Naive thymus-derived CD4-positive, alpha-beta T cell (primary cell): ENCODE measurements at regions of chr3 and their contacts with region 1.

Region 1: DNA sequence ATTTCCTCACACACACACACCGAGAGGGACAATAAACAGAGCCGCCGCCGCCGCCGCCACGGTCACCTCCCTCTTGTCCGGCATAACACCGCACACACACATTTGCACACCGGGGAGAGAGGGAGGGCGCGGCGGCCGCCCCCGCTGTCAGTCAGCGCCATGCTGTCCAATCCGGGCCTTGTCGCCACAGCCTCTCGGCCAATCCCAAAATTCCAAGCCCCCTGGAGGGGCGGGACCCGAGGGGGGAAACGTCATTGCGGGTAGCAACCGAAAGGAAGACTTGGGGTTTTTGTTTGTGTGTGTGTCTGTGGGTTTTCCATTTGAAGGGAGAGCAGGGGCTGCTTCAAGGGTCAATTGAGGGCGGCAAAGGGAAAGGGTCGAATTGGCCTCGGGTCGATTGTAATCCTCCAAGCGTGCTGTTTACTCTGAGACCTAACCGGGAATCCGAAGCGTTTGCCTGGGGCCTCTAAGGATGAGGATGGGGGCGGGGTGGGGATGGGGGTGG is at the start of gene TOP2B:
- DNase-seq: peak; percentile 87 to 96 (median 95)
- ATAC-seq: peak; percentile 96
- H3K4me3 ChIP-seq: peak within 1 kb of the TSS; percentile 63
- H3K4me3 Mint-ChIP-seq: peak within 1 kb of the TSS; percentile 89 to 100 (median 99)
- H3K27ac ChIP-seq: peak within 1 kb of the TSS; percentile 95
- H3K27ac Mint-ChIP-seq: peak within 1 kb of the TSS; percentile 97 to 100 (median 99)
- H3K4me1 ChIP-seq: peaks cover 11 to 34% of the 10 kb centered on the region in 2 donors
- H3K4me1 Mint-ChIP-seq: peaks cover 20 to 57% (median 50%) of the 10 kb centered on the region in 7 donors
- H3K27me3 ChIP-seq: no peaks in the 10 kb centered on the region
- H3K27me3 Mint-ChIP-seq: peaks cover 0 to 4% (median 0%) of the 10 kb centered on the region in 5 donors
- total RNA-seq, gene TOP2B: 109 to 190 (median 127) TPM

Region 2: GRCh38 chr3:23916886-23917678 is 1747.8 kb before region 1 on chr3 and contains the starts of genes NKIRAS1 and RPL15:
- CTCF ChIA-PET with region 1: no interaction called
- POLR2A ChIA-PET with region 1: no interaction called
- intact Hi-C with region 1: loop called (anchors 2 to 10 kb)
- DNase-seq: peak; percentile 90 to 98 (median 97)
- ATAC-seq: peak; percentile 97
- H3K4me3 ChIP-seq: peak within 1 kb of the TSS; percentile 88
- H3K4me3 Mint-ChIP-seq: peak within 1 kb of the TSS; percentile 92 to 100 (median 98)
- H3K27ac ChIP-seq: peak within 1 kb of the TSS; percentile 83
- H3K27ac Mint-ChIP-seq: peak within 1 kb of the TSS; percentile 97 to 99 (median 98)
- H3K4me1 ChIP-seq: peaks cover 14 to 18% of the 10 kb centered on the region in 2 donors
- H3K4me1 Mint-ChIP-seq: peaks cover 33 to 52% (median 49%) of the 10 kb centered on the region in 7 donors
- H3K27me3 ChIP-seq: no peaks in the 10 kb centered on the region
- H3K27me3 Mint-ChIP-seq: peaks cover 0 to 4% (median 0%) of the 10 kb centered on the region in 5 donors
- total RNA-seq, gene NKIRAS1: 2.2 to 6.4 (median 3.2) TPM
- total RNA-seq, gene RPL15: 1,489 to 2,250 (median 2,129) TPM

Region 3: DNA sequence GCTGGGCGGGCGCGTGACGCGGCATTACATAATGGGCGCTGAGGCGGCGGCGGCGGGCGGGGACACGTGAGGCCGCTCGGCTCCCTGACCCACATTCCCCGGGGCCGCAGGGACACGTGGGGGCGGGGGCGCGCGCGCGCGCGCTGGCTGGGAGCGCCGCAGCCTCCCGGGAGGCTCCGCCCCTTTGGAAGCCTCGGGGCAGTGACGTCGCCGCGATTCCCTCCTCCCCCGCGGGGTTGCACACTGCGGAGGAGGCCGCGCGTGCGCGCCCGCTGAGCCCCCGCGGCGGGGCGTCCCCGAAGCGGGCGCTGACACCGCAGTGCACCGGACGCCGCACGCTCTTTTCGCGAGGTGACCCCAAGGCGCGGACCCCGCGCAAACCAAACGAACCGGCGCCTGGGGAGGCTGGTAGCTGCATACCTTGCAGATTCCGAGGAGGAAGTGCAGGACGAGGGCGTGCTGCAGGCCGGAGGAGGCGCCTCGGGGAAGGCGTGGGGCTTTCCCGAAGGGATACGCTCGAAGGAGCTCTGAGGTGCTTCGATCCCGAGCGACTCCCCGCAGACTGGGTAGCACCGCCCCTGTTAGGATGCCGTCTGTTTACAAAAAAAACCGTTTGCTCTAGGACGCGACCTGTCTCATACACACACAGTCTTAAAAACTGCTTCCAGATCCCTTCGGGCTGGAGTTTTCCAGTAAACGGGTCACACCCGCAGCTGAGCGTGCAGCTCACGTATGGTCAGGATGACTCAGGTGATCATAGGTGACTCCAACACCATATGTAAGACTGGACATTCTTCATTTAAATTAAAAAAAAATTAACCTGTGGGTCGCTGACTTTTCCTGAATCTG is 1718.7 kb before region 1 on chr3:
- CTCF ChIA-PET with region 1: no interaction called
- POLR2A ChIA-PET with region 1: no interaction called
- intact Hi-C with region 1: loop called in 1 of 2 experiments (anchors 10 kb)
- DNase-seq: peak; percentile 93 to 98 (median 97)
- ATAC-seq: peak; percentile 89
- H3K4me3 ChIP-seq: peak overlapping the region; percentile 79
- H3K4me3 Mint-ChIP-seq: peak overlapping the region; percentile 70 to 90 (median 87)
- H3K27ac ChIP-seq: peak overlapping the region; percentile 81
- H3K27ac Mint-ChIP-seq: peak overlapping the region; percentile 53 to 95 (median 90)
- H3K4me1 ChIP-seq: peaks cover 28 to 31% of the 10 kb centered on the region in 2 donors
- H3K4me1 Mint-ChIP-seq: peaks cover 30 to 61% (median 48%) of the 10 kb centered on the region in 7 donors
- H3K27me3 ChIP-seq: no peaks in the 10 kb centered on the region
- H3K27me3 Mint-ChIP-seq: peaks cover 0 to 41% (median 0%) of the 10 kb centered on the region in 5 donors

Region 4: GRCh38 chr3:25556447-25556846 is 108.4 kb before region 1 on chr3:
- CTCF ChIA-PET with region 1: no interaction called
- POLR2A ChIA-PET with region 1: no interaction called
- intact Hi-C with region 1: no loop called
- DNase-seq: no peak
- ATAC-seq: no peak
- H3K4me3 ChIP-seq: no peak overlapping the region
- H3K4me3 Mint-ChIP-seq: no peak overlapping the region
- H3K27ac ChIP-seq: no peak overlapping the region
- H3K27ac Mint-ChIP-seq: no peak overlapping the region
- H3K4me1 ChIP-seq: no peaks in the 10 kb centered on the region
- H3K4me1 Mint-ChIP-seq: no peaks in the 10 kb centered on the region
- H3K27me3 ChIP-seq: no peaks in the 10 kb centered on the region
- H3K27me3 Mint-ChIP-seq: peaks cover 0 to 9% (median 5%) of the 10 kb centered on the region in 5 donors

Region 5: DNA sequence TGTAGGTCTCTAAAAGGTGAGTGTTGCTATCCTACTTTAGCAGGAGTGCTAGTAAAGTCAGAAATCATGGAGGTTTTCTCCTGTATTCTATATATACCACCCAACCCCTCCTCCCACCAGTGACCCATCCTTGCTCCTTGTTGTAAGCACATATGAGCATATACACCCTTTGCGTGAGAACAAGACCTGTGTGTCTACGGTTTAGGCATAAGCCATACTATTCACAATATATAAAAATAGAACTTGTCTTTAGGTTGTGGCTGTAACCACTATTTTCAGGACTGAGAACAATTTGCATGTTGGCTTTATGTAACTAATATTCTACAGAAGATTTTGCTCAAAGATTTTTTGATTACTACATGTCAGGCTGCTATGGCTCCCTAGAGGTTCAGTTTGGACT is 58.9 kb after region 1 on chr3:
- CTCF ChIA-PET with region 1: no interaction called
- POLR2A ChIA-PET with region 1: interaction called, 9 read pairs
- intact Hi-C with region 1: loop called in 1 of 2 experiments (anchors 5 kb)
- DNase-seq: no peak
- ATAC-seq: no peak
- H3K4me3 ChIP-seq: no peak overlapping the region
- H3K4me3 Mint-ChIP-seq: no peak overlapping the region
- H3K27ac ChIP-seq: no peak overlapping the region
- H3K27ac Mint-ChIP-seq: peak overlapping the region in 1 of 9 donors; percentile 10
- H3K4me1 ChIP-seq: no peaks in the 10 kb centered on the region
- H3K4me1 Mint-ChIP-seq: peaks cover 0 to 7% (median 0%) of the 10 kb centered on the region in 7 donors
- H3K27me3 ChIP-seq: no peaks in the 10 kb centered on the region
- H3K27me3 Mint-ChIP-seq: no peaks in the 10 kb centered on the region

Region 6: GRCh38 chr3:25789596-25790556 is 125.0 kb after region 1 on chr3 and contains the start of gene OXSM:
- CTCF ChIA-PET with region 1: no interaction called
- POLR2A ChIA-PET with region 1: interaction called, 4 read pairs
- intact Hi-C with region 1: loop called (anchors 1 kb)
- DNase-seq: peak; percentile 66 to 92 (median 86)
- ATAC-seq: peak; percentile 96
- H3K4me3 ChIP-seq: peak within 1 kb of the TSS; percentile 80
- H3K4me3 Mint-ChIP-seq: peak within 1 kb of the TSS; percentile 87 to 100 (median 98)
- H3K27ac ChIP-seq: peak within 1 kb of the TSS; percentile 91
- H3K27ac Mint-ChIP-seq: peak within 1 kb of the TSS; percentile 81 to 100 (median 98)
- H3K4me1 ChIP-seq: peaks cover 6 to 20% of the 10 kb centered on the region in 2 donors
- H3K4me1 Mint-ChIP-seq: peaks cover 14 to 59% (median 52%) of the 10 kb centered on the region in 7 donors
- H3K27me3 ChIP-seq: no peaks in the 10 kb centered on the region
- H3K27me3 Mint-ChIP-seq: no peaks in the 10 kb centered on the region
- total RNA-seq, gene OXSM: 10.6 to 16.5 (median 13.2) TPM

Region 7: DNA sequence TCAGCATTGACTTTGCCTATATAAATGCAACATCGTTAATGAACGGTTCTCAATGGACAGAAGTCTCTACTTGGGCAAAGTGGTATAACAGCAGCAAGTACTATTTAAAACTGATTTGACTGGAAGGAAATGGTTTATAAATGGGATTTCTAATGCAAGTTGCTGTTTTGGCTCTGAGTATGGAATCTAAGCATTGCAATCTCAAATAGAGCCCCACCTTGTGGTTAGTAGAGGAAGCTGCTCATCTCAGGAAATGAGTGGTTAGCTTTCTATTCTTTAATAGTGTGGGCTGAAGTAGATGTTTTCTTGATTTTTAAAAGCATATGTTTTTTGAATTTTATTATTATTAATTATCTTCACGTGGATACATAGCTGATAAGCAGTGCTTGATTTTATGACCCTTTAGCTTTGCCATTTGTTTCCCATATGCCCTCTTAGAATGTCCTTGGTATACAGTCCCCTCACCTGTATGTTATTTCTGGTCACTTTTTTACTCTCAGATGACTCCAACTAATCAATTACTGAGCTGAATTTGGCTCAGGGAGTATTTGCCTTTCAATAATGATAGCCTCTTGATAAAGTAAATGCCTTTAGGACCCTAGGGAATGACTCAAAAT is 192.1 kb after region 1 on chr3:
- CTCF ChIA-PET with region 1: interaction called, 6 read pairs
- POLR2A ChIA-PET with region 1: interaction called, 3 read pairs
- intact Hi-C with region 1: loop called (anchors 1 to 5 kb)
- DNase-seq: peak in 7 of 9 donors; percentile 10 to 56 (median 37)
- ATAC-seq: peak; percentile 87
- H3K4me3 ChIP-seq: no peak overlapping the region
- H3K4me3 Mint-ChIP-seq: no peak overlapping the region
- H3K27ac ChIP-seq: no peak overlapping the region
- H3K27ac Mint-ChIP-seq: no peak overlapping the region
- H3K4me1 ChIP-seq: no peaks in the 10 kb centered on the region
- H3K4me1 Mint-ChIP-seq: peaks cover 0 to 3% (median 0%) of the 10 kb centered on the region in 7 donors
- H3K27me3 ChIP-seq: no peaks in the 10 kb centered on the region
- H3K27me3 Mint-ChIP-seq: no peaks in the 10 kb centered on the region

Region 8: GRCh38 chr3:25973122-25973521 is 308.3 kb after region 1 on chr3:
- CTCF ChIA-PET with region 1: no interaction called
- POLR2A ChIA-PET with region 1: no interaction called
- intact Hi-C with region 1: no loop called
- DNase-seq: no peak
- ATAC-seq: no peak
- H3K4me3 ChIP-seq: no peak overlapping the region
- H3K4me3 Mint-ChIP-seq: no peak overlapping the region
- H3K27ac ChIP-seq: no peak overlapping the region
- H3K27ac Mint-ChIP-seq: no peak overlapping the region
- H3K4me1 ChIP-seq: no peaks in the 10 kb centered on the region
- H3K4me1 Mint-ChIP-seq: no peaks in the 10 kb centered on the region
- H3K27me3 ChIP-seq: no peaks in the 10 kb centered on the region
- H3K27me3 Mint-ChIP-seq: peaks cover 0 to 20% (median 6%) of the 10 kb centered on the region in 5 donors

Region 9: DNA sequence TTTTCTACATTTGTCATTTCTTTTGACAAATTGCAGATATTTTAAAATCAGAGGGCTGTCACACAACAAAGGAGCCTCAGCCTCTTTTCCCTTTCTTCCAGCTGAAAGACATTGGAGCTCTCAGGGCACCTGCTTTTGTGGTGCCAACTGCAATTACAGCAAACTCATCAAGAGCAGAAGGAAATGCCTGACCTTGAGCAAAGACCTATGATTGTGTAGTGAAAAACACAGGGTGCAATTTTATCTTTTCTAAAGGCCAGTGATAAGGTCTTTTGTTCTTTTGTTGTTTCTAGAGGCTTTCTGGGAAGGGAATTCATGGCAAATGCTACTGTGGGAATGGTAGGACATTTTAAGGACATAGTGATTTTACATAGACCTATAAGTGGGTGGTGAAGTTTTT is 339.3 kb after region 1 on chr3:
- CTCF ChIA-PET with region 1: no interaction called
- POLR2A ChIA-PET with region 1: no interaction called
- intact Hi-C with region 1: no loop called
- DNase-seq: no peak
- ATAC-seq: no peak
- H3K4me3 ChIP-seq: no peak overlapping the region
- H3K4me3 Mint-ChIP-seq: no peak overlapping the region
- H3K27ac ChIP-seq: no peak overlapping the region
- H3K27ac Mint-ChIP-seq: no peak overlapping the region
- H3K4me1 ChIP-seq: no peaks in the 10 kb centered on the region
- H3K4me1 Mint-ChIP-seq: no peaks in the 10 kb centered on the region
- H3K27me3 ChIP-seq: no peaks in the 10 kb centered on the region
- H3K27me3 Mint-ChIP-seq: no peaks in the 10 kb centered on the region

Region 10: GRCh38 chr3:27632431-27633223 is 1967.8 kb after region 1 on chr3:
- CTCF ChIA-PET with region 1: no interaction called
- POLR2A ChIA-PET with region 1: no interaction called
- intact Hi-C with region 1: loop called in 1 of 2 experiments (anchors 10 kb)
- DNase-seq: peak; percentile 21 to 56 (median 44)
- ATAC-seq: peak; percentile 92
- H3K4me3 ChIP-seq: peak overlapping the region; percentile 77
- H3K4me3 Mint-ChIP-seq: peak overlapping the region; percentile 92 to 99 (median 95)
- H3K27ac ChIP-seq: peak overlapping the region; percentile 70
- H3K27ac Mint-ChIP-seq: peak overlapping the region; percentile 88 to 99 (median 93)
- H3K4me1 ChIP-seq: peaks cover 0 to 18% of the 10 kb centered on the region in 2 donors
- H3K4me1 Mint-ChIP-seq: peaks cover 11 to 31% (median 29%) of the 10 kb centered on the region in 7 donors
- H3K27me3 ChIP-seq: no peaks in the 10 kb centered on the region
- H3K27me3 Mint-ChIP-seq: no peaks in the 10 kb centered on the region